ENCODE measurements at regions of chr12 and their contacts with region 1.

Region 1: GRCh38 chr12:62799126-62799736 is 135.7 kb downstream of the PPM1H start:
- DNase-seq: peak; percentile 77
- H3K4me3 ChIP-seq: no peak overlapping the region
- CTCF ChIP-seq: peak; percentile 94

Region 2: DNA sequence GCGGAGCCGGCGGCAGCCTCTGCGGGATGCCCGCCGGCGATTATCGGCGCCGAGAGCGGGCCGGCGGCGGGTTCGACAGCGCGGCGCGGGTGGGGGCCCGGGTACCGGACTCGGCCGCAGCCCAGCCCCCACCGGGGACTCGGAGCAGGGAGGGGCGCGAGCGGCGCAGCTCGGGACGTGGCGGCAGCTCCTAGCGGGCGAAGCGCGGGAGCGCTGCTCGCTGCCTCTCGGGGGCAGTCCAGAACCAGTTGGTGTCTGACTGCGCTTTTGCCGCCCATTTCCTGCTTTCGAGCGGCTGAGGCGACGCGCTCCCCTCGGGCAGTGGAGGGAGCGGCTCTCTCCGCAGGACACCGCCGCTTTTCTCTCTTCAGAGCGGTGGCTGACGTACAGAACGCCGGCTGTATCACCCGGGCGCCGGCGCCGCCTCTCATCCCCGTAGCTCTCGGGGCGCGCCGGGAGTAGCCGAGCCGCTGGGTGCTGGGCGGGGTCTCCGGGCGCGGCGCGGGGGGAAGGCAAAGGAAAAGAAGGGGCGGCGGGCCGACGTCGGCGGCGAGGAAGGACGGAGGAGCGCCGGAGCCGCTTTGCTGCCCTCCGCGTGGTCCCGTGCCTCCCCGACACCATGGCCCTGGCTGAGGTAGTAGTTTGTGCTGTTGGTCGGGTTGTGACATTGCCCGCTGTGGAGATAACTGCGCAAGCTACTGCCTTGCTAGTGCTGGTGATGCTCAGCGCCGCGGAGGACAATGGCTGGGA is 196.0 kb before region 1 on chr12:
- in situ Hi-C with region 1: loop called (anchors 25 kb)
- DNase-seq: peak; percentile 91
- H3K4me3 ChIP-seq: peak overlapping the region; percentile 87
- CTCF ChIP-seq: peak; percentile 53

Measured in astrocyte of the spinal cord (primary cell).